Activated CD4-positive, alpha-beta memory T cell treated with anti-CD3 and anti-CD28 coated beads, Interleukin-2, amount 10 ng/mL, durations not matched to agents 7 days and 5 days (primary cell): ENCODE measurements at regions of chr7 and their contacts with region 1.

Region 1: GRCh38 chr7:149125863-149126661 is at the start of gene ZNF425:
- DNase-seq: peak; percentile 94
- H3K4me3 Mint-ChIP-seq: peak within 1 kb of the TSS; percentile 100
- H3K27ac Mint-ChIP-seq: peak within 1 kb of the TSS; percentile 99
- H3K4me1 Mint-ChIP-seq: peaks cover 24% of the 10 kb centered on the region
- H3K27me3 Mint-ChIP-seq: no peaks in the 10 kb centered on the region
- total RNA-seq, gene ZNF425: 1.1 TPM

Region 2: DNA sequence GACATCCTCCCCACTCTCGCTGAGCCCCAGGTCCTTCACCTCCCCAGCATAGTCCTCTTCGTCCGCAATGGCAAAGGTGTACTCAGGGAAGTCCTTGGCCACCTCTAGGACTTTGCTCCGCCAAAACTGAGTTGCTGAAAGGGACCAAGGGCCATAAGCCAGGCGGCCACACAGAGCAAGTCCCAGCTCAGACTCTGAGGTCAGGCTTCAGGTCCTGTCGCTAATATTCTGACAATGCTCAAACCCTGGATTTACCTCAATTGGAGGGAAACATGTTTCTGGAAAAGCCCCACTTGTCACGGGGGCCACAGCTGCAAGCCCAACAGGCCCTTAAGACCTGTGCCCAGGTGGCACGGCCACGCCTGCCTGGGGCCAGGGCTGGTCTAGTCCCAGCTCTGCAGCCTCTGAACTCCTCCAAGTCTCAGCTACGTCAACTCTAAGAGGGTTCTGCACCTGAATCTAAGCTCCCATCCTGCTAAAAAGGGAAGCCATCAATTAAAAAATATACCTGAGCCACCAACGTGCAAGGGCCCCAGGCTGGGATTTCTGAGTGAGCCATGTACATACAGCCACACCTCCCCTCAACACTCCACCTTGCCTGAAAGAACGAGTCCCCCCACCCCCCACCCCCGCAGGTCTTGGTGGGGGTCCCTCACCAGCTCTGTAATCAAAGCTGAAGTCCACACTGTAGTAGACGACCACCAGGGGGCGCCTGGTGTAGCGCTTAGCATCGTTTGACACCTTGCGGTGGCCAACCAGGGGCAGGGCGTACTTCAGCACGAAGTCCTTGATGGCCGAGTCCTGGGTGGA is 120.6 kb before region 1 on chr7:
- CTCF ChIA-PET with region 1: no interaction called
- POLR2A ChIA-PET with region 1: no interaction called
- DNase-seq: peak; percentile 81
- H3K4me3 Mint-ChIP-seq: no peak overlapping the region
- H3K27ac Mint-ChIP-seq: peak overlapping the region; percentile 64
- H3K4me1 Mint-ChIP-seq: peaks cover 6% of the 10 kb centered on the region
- H3K27me3 Mint-ChIP-seq: no peaks in the 10 kb centered on the region

Region 3: GRCh38 chr7:149028346-149029109 is 97.5 kb before region 1 on chr7 and contains the start of gene PDIA4:
- CTCF ChIA-PET with region 1: interaction called, 3 read pairs
- POLR2A ChIA-PET with region 1: interaction called, 16 read pairs
- DNase-seq: peak; percentile 100
- H3K4me3 Mint-ChIP-seq: peak within 1 kb of the TSS; percentile 89
- H3K27ac Mint-ChIP-seq: peak within 1 kb of the TSS; percentile 92
- H3K4me1 Mint-ChIP-seq: peaks cover 44% of the 10 kb centered on the region
- H3K27me3 Mint-ChIP-seq: peaks cover 3% of the 10 kb centered on the region
- total RNA-seq, gene PDIA4: 108 TPM

Region 4: DNA sequence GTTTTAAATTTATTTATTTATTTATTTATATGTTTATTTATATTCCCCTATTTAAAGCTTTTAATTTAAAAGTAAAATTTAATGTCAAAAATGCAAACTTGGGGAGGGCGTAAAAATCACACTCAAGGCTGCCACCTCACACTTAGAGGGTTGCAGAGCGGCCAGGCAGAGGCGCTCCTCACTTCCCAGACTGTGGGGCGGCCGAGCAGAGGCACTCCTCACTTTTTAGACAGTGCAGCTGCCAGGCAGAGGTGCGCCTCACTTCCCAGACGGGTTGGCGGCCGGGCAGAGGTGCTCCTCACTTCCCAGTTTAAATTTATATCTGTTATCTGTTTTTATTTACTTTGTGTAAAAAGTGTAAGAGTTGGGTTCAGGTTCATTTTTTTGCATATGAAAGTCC is 10.1 kb after region 1 on chr7:
- CTCF ChIA-PET with region 1: interaction called, 3 read pairs
- POLR2A ChIA-PET with region 1: interaction called, 11 read pairs
- DNase-seq: no peak
- H3K4me3 Mint-ChIP-seq: no peak overlapping the region
- H3K27ac Mint-ChIP-seq: no peak overlapping the region
- H3K4me1 Mint-ChIP-seq: no peaks in the 10 kb centered on the region
- H3K27me3 Mint-ChIP-seq: no peaks in the 10 kb centered on the region

Region 5: DNA sequence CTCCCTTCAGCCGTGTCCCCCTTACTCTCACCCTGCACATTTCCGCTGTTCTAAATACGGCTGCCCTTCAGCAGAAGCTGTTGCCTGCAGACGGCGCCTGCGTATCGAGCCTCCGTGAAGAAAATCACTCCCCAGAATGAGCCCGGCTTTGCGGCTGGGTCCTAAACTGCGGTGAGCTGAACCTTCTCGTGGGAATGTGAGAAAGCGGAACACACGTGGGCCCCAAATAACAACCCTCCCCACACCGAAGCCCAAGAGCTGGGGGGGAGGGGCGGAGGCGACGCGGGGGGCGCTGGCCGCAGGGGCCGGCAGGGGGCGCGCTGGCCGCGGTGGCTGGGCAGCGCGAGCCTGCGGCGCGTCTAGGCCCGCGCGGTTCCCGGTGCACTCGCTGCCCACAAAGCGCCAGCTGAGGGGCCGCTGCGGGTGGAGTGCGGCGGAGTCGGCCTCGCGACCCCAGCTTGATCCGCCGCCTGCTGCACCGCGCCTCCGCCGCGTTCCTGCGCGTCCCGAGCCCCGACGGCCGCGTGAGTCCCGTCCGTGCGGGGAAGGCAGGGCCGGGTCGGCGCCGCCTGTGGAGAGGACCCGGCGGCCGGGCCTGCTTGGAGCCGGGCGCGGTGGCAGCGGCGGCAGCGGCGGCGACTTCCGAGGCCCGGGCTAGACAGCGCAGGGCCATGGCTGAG is 21.1 kb after region 1 on chr7 and contains the start of gene ZNF398:
- CTCF ChIA-PET with region 1: interaction called, 49 read pairs
- POLR2A ChIA-PET with region 1: interaction called, 83 read pairs
- DNase-seq: peak; percentile 79
- H3K4me3 Mint-ChIP-seq: peak within 1 kb of the TSS; percentile 85
- H3K27ac Mint-ChIP-seq: peak within 1 kb of the TSS; percentile 90
- H3K4me1 Mint-ChIP-seq: peaks cover 35% of the 10 kb centered on the region
- H3K27me3 Mint-ChIP-seq: no peaks in the 10 kb centered on the region
- total RNA-seq, gene ZNF398: 12.1 to 13.7 TPM